IMR-90 (cell line): ENCODE measurements at regions of chr13 and their contacts with region 1.

Region 1: DNA sequence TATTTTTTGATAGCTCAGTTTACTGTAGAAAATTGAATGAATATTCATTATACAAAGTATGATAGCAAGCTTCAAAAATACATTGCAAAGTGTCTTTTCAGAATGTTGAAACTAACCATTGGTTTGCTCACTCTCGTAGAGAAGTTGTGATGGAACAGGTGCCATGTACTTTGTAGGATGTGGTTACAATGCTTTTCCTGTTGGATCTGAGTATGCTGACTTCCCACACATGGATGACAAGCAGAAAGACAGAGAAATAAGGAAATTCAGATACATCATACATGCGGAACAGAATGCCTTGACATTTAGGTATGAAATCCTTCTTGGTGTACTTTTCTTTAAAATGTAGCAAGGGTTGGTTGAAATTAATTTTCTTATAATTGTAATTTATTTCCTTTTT is 30.5 kb downstream of the CDADC1 start:
- DNase-seq: no peak
- ATAC-seq: no peak
- H3K4me3 ChIP-seq: no peak overlapping the region
- H3K27ac ChIP-seq: no peak overlapping the region
- H3K4me1 ChIP-seq: no peaks in the 10 kb centered on the region
- H3K27me3 ChIP-seq: no peaks in the 10 kb centered on the region
- CTCF ChIP-seq: no peak
- POLR2A ChIP-seq: no peak
- RAD21 ChIP-seq: no peak

Region 2: GRCh38 chr13:49240017-49240416 is 38.2 kb before region 1 on chr13:
- CTCF ChIA-PET with region 1: interaction called, 6 read pairs
- POLR2A ChIA-PET with region 1: no interaction called
- dilution Hi-C with region 1: no loop called
- in situ Hi-C with region 1: no loop called
- intact Hi-C with region 1: loop called (anchors 2 kb)
- DNase-seq: peak; percentile 46
- ATAC-seq: peak; percentile 79
- H3K4me3 ChIP-seq: no peak overlapping the region
- H3K27ac ChIP-seq: no peak overlapping the region
- H3K4me1 ChIP-seq: no peaks in the 10 kb centered on the region
- H3K27me3 ChIP-seq: no peaks in the 10 kb centered on the region; the same call in 1 of the 2 replicates
- CTCF ChIP-seq: peak; percentile 58
- POLR2A ChIP-seq: no peak
- RAD21 ChIP-seq: peak; percentile 56

Region 3: GRCh38 chr13:49256841-49257240 is 21.4 kb before region 1 on chr13:
- CTCF ChIA-PET with region 1: no interaction called
- POLR2A ChIA-PET with region 1: no interaction called
- dilution Hi-C with region 1: no loop called
- in situ Hi-C with region 1: no loop called
- intact Hi-C with region 1: no loop called
- DNase-seq: peak; percentile 10
- ATAC-seq: no peak
- H3K4me3 ChIP-seq: no peak overlapping the region
- H3K27ac ChIP-seq: no peak overlapping the region
- H3K4me1 ChIP-seq: no peaks in the 10 kb centered on the region
- H3K27me3 ChIP-seq: no peaks in the 10 kb centered on the region
- CTCF ChIP-seq: no peak
- POLR2A ChIP-seq: no peak
- RAD21 ChIP-seq: no peak